ENCODE measurements at regions of chr2 and their contacts with region 1.

Region 1: DNA sequence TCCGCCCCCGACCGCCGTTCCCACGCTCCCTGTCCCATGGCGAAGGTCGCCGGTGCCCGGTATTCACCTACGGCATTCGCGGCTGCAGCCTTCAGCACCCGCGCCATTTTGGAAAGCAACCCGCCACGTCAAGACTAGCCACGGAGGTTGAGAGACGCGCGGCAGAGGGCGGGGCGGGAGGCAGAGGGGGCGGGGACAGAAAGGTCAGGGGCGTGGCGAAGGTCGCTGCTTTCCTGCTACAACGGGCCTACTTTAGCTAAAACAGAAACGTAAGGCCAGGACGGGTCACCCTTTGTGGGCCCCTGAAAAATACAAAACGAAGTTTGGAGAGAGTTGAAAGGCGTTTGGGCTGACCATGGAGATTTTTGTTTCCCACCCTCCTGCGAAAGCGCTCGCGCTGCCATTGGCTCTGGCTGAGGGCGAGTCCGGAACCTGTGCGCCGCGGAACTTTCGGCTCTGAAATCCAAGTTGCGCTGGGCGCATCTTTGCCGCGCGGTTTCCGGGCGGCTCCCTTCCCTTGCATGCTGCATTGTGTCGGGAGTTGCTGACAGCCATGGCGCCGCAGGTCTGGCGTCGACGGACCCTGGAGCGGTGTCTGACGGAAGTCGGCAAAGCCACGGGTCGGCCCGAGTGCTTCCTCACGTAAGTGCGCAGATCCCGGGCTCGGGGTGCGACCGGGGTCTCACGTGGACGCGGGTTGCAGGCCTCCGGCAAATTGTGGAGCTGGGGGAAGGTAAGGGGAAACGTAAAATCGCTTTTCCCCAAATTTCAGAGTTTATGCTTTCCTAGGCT is at the starts of genes MCEE and MPHOSPH10:
- DNase-seq: peak; percentile 89
- H3K4me3 ChIP-seq: peak within 1 kb of the TSS; percentile 54 to 89
- H3K27ac ChIP-seq: peak within 1 kb of the TSS; percentile 93 to 96
- H3K4me1 ChIP-seq: peaks cover 6% of the 10 kb centered on the region
- H3K27me3 ChIP-seq: no peaks in the 10 kb centered on the region
- CTCF ChIP-seq: peak in 1 of 4 experiments; percentile 15
- POLR2A ChIP-seq: peak; percentile 50
- total RNA-seq, gene MCEE: 18.2 to 41.4 TPM
- total RNA-seq, gene MPHOSPH10: 20.2 to 25.9 TPM

Region 2: DNA sequence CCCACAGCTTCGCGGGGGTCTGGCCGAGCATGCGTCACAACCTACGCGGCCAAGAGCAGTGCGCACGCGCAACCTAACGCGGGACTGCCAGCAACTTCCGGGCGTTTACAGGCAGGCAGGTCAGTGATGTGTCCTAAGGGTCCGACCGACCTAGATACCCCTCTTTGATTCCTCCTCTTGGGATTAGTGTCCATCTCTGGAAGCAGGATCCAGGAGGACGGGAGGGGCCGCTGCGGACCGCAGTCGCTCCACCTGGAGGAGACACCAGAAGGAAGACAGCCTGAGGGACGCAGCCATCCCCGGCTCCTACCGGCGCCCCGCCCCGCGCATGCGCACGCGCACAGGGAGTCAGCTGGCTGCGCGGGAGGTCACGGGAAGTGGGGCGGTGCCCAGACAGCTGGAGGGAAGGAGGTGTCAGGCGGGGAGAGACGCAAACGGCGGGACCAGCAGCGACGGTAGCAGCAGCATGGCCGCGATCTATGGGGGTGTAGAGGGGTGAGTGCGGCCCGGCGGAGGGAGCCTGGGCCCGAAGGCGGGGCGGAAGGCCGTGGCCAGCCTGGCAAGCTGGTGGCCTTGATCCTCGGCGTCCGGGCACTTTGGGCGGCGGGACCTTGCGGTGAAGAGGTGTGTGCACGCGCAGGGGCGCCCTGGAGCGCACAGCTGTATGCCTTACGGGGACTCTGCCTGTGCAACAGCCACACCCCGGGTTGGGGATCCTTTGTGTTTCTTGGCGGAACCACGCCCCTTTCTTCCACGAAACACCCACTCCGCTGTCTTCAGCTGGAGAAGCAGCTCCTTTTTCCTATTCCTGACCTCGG is 61.9 kb before region 1 on chr2 and contains the start of gene NAGK:
- intact Hi-C with region 1: loop called (anchors 5 kb)
- DNase-seq: peak; percentile 93
- H3K4me3 ChIP-seq: peak within 1 kb of the TSS; percentile 75 to 77
- H3K27ac ChIP-seq: peak within 1 kb of the TSS; percentile 89 to 97
- H3K4me1 ChIP-seq: no peaks in the 10 kb centered on the region
- H3K27me3 ChIP-seq: no peaks in the 10 kb centered on the region
- CTCF ChIP-seq: peak in 2 of 4 experiments; percentile 20 to 22
- POLR2A ChIP-seq: peak; percentile 99
- total RNA-seq, gene NAGK: 56.4 to 58.5 TPM

Measured in prostate gland (tissue), 2 donors.